H1 (cell line): ENCODE measurements at regions of chr2 and their contacts with region 1.

Region 1: DNA sequence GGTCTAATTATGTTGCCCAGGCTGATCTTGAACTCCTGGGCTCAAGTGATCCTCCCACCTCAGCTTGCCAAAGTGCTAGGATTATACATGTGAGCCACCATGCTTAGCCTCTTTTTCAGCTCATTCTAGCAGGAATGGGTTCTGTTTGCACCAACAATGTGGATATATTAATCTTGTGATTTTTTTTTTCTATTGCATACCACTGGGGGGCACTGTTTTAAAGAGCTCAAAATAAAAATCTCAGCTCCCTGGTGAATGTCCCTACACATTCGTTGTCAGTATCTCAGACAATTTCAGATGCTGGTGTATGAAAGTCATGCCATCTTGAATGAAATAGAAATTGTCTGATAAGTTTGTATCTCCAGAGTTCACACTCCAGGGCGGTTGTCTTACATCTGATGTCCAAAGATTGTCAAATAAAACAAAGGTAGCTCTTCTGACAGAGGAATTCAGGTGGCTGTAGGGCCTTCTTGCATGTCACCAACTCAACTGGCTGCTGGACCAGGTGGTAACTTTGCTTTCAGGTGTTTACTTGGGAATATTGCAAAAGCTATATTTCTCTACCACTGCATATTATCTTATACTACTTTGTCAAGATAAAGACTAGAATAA is 3.1 kb upstream of the MATN3 start:
- DNase-seq: no peak
- H3K4me3 ChIP-seq: no peak overlapping the region
- H3K27ac ChIP-seq: no peak overlapping the region
- H3K4me1 ChIP-seq: peaks cover 0 to 13% (median 7%) of the 10 kb centered on the region in 4 experiments; a peak in 3 of 7 replicates
- H3K27me3 ChIP-seq: peaks cover 0 to 23% (median 14%) of the 10 kb centered on the region in 4 experiments; a peak in 6 of 7 replicates
- CTCF ChIP-seq: peak in 2 of 3 experiments; percentile 39 to 44; a peak in 2 of 4 replicates
- EP300 ChIP-seq: no peak
- POLR2A ChIP-seq: no peak
- RAD21 ChIP-seq: peak; percentile 37 to 52

Region 2: DNA sequence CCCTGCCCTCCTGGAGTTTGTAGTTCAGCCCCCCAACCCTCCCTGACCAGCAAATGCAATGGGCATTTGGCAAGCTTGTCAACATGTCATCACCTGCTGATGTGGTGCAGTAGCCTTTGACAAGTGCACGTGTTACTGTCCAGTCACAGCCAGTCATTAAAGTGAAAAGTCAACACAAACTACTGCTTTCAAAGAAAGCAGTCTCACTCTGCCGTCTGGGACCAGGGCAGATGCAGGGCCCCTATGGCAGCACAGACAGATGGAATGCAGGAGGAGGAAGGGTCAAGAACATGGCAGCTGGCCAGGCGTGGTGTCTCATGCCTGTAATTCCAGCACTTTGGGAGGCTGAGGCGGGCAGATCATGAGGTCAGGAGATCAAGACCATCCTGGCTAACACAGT is 434.7 kb before region 1 on chr2:
- CTCF ChIA-PET with region 1: no interaction called
- POLR2A ChIA-PET with region 1: no interaction called
- DNase-seq: no peak
- H3K4me3 ChIP-seq: no peak overlapping the region
- H3K27ac ChIP-seq: no peak overlapping the region
- H3K4me1 ChIP-seq: no peaks in the 10 kb centered on the region
- H3K27me3 ChIP-seq: no peaks in the 10 kb centered on the region
- CTCF ChIP-seq: no peak
- EP300 ChIP-seq: no peak
- POLR2A ChIP-seq: no peak
- RAD21 ChIP-seq: no peak

Region 3: GRCh38 chr2:19971691-19972090 is 43.9 kb before region 1 on chr2:
- CTCF ChIA-PET with region 1: interaction called, 13 read pairs
- POLR2A ChIA-PET with region 1: no interaction called
- DNase-seq: no peak
- H3K4me3 ChIP-seq: no peak overlapping the region
- H3K27ac ChIP-seq: no peak overlapping the region
- H3K4me1 ChIP-seq: no peaks in the 10 kb centered on the region
- H3K27me3 ChIP-seq: no peaks in the 10 kb centered on the region
- CTCF ChIP-seq: no peak
- EP300 ChIP-seq: no peak
- POLR2A ChIP-seq: no peak
- RAD21 ChIP-seq: no peak

Region 4: GRCh38 chr2:20001361-20001863 is 14.2 kb before region 1 on chr2:
- CTCF ChIA-PET with region 1: interaction called, 45 read pairs
- POLR2A ChIA-PET with region 1: interaction called, 4 read pairs
- DNase-seq: no peak
- H3K4me3 ChIP-seq: no peak overlapping the region
- H3K27ac ChIP-seq: no peak overlapping the region
- H3K4me1 ChIP-seq: no peaks in the 10 kb centered on the region
- H3K27me3 ChIP-seq: no peaks in the 10 kb centered on the region
- CTCF ChIP-seq: no peak
- EP300 ChIP-seq: no peak
- POLR2A ChIP-seq: no peak
- RAD21 ChIP-seq: no peak

Region 5: GRCh38 chr2:20040489-20041172 is 25.1 kb after region 1 on chr2:
- CTCF ChIA-PET with region 1: interaction called, 35 read pairs
- POLR2A ChIA-PET with region 1: interaction called, 3 read pairs
- DNase-seq: no peak
- H3K4me3 ChIP-seq: no peak overlapping the region
- H3K27ac ChIP-seq: no peak overlapping the region
- H3K4me1 ChIP-seq: 0 out of 7 replicates have a peak, but pooled peaks cover 0 to 2% (median 0%) of the 10 kb centered on the region in 4 experiments
- H3K27me3 ChIP-seq: no peaks in the 10 kb centered on the region
- CTCF ChIP-seq: no peak
- EP300 ChIP-seq: no peak
- POLR2A ChIP-seq: no peak
- RAD21 ChIP-seq: no peak

Region 6: GRCh38 chr2:20057268-20057667 is 41.7 kb after region 1 on chr2:
- CTCF ChIA-PET with region 1: interaction called, 57 read pairs
- POLR2A ChIA-PET with region 1: no interaction called
- DNase-seq: no peak
- H3K4me3 ChIP-seq: no peak overlapping the region
- H3K27ac ChIP-seq: no peak overlapping the region
- H3K4me1 ChIP-seq: peaks cover 0 to 2% (median 0%) of the 10 kb centered on the region in 4 experiments; a peak in 1 of 7 replicates
- H3K27me3 ChIP-seq: no peaks in the 10 kb centered on the region
- CTCF ChIP-seq: no peak
- EP300 ChIP-seq: no peak
- POLR2A ChIP-seq: no peak
- RAD21 ChIP-seq: no peak

Region 7: GRCh38 chr2:20071397-20072383 is 56.1 kb after region 1 on chr2:
- CTCF ChIA-PET with region 1: interaction called, 31 read pairs
- POLR2A ChIA-PET with region 1: interaction called, 3 read pairs
- DNase-seq: peak; percentile 21 to 54
- H3K4me3 ChIP-seq: no peak overlapping the region
- H3K27ac ChIP-seq: no peak overlapping the region
- H3K4me1 ChIP-seq: peaks cover 0 to 9% (median 5%) of the 10 kb centered on the region in 4 experiments; a peak in 6 of 7 replicates
- H3K27me3 ChIP-seq: no peaks in the 10 kb centered on the region
- CTCF ChIP-seq: no peak
- EP300 ChIP-seq: no peak
- POLR2A ChIP-seq: no peak; a peak in 1 of 3 replicates
- RAD21 ChIP-seq: no peak

Region 8: GRCh38 chr2:20097879-20098714 is 82.5 kb after region 1 on chr2:
- CTCF ChIA-PET with region 1: interaction called, 125 read pairs
- POLR2A ChIA-PET with region 1: interaction called, 8 read pairs
- DNase-seq: peak; percentile 91
- H3K4me3 ChIP-seq: no peak overlapping the region
- H3K27ac ChIP-seq: no peak overlapping the region
- H3K4me1 ChIP-seq: peaks cover 3 to 10% (median 5%) of the 10 kb centered on the region in 4 experiments; a peak in 6 of 7 replicates
- H3K27me3 ChIP-seq: no peaks in the 10 kb centered on the region
- CTCF ChIP-seq: peak; percentile 97 to 99 (median 99)
- EP300 ChIP-seq: peak in 1 of 2 experiments; percentile 97; a peak in 2 of 3 replicates
- POLR2A ChIP-seq: no peak
- RAD21 ChIP-seq: peak; percentile 99